CD8-positive, alpha-beta T cell (primary cell): ENCODE measurements at regions of chr15 and their contacts with region 1.

Region 1: GRCh38 chr15:40204100-40204499 is 34.8 kb upstream of the PAK6 start:
- DNase-seq: no peak
- ATAC-seq: no peak
- H3K4me3 ChIP-seq: no peak overlapping the region
- H3K4me3 Mint-ChIP-seq: no peak overlapping the region
- H3K27ac ChIP-seq: no peak overlapping the region
- H3K27ac Mint-ChIP-seq: no peak overlapping the region
- H3K4me1 ChIP-seq: no peaks in the 10 kb centered on the region
- H3K4me1 Mint-ChIP-seq: peaks cover under 1% of the 10 kb centered on the region
- H3K27me3 ChIP-seq: no peaks in the 10 kb centered on the region
- H3K27me3 Mint-ChIP-seq: no peaks in the 10 kb centered on the region
- CTCF ChIP-seq: no peak

Region 2: DNA sequence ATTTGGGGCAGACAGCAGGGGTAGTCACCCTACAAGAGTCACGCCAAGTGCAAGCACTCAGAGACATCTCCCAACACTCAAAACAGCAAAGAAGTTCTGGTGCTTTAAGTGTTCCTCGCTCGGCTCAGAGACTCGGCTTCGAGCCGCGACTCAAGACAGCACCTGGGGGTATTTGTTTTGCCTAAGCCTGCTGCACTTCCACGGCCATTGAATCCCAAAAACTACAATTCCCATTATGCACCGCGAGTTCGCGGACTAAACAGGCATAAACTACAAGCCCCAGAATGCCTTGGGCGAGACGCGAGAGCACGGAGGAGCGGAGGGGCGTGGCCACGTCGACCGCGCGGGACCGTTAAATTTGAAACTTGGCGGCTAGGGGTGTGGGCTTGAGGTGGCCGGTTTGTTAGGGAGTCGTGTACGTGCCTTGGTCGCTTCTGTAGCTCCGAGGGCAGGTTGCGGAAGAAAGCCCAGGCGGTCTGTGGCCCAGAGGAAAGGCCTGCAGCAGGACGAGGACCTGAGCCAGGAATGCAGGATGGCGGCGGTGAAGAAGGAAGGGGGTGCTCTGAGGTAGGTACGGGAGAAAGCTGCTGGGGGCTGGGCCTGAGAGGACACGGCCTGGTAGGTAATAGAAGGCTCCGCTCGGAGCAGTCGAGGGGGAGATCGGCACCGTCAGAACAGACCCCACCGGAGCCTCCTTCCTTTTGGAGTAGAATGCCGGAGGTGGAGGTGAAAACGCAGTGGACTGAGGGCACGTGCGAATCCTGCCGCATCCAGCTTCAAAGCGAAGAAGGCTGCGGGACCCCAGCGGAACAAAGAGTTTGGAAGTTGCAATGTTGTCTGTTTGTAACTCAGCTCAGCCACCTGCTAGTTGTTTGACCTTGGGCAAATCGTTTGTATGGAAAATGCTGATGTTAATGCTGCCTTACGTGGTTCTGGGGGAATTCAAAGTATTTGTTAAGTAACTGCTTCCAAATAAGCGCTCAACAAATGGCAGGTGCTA is 43.1 kb before region 1 on chr15 and contains the start of gene BUB1B:
- CTCF ChIA-PET with region 1: no interaction called
- POLR2A ChIA-PET with region 1: no interaction called
- intact Hi-C with region 1: no loop called
- DNase-seq: peak; percentile 82 to 96 (median 91)
- ATAC-seq: peak; percentile 98
- H3K4me3 ChIP-seq: peak within 1 kb of the TSS; percentile 61 to 71
- H3K4me3 Mint-ChIP-seq: no peak within 1 kb of the TSS
- H3K27ac ChIP-seq: no peak within 1 kb of the TSS
- H3K27ac Mint-ChIP-seq: no peak within 1 kb of the TSS
- H3K4me1 ChIP-seq: peaks cover 10% of the 10 kb centered on the region
- H3K4me1 Mint-ChIP-seq: no peaks in the 10 kb centered on the region
- H3K27me3 ChIP-seq: no peaks in the 10 kb centered on the region
- H3K27me3 Mint-ChIP-seq: no peaks in the 10 kb centered on the region
- CTCF ChIP-seq: no peak
- total RNA-seq, gene BUB1B: 0.47 to 1.2 TPM

Region 3: GRCh38 chr15:40256638-40257235 is 52.6 kb after region 1 on chr15:
- CTCF ChIA-PET with region 1: no interaction called
- POLR2A ChIA-PET with region 1: no interaction called
- intact Hi-C with region 1: loop called in 1 of 2 experiments (anchors 1 kb)
- DNase-seq: peak in 2 of 9 experiments; percentile 67 to 76
- ATAC-seq: peak; percentile 67
- H3K4me3 ChIP-seq: no peak overlapping the region
- H3K4me3 Mint-ChIP-seq: no peak overlapping the region
- H3K27ac ChIP-seq: peak overlapping the region in 1 of 2 experiments; percentile 63
- H3K27ac Mint-ChIP-seq: peak overlapping the region; percentile 52
- H3K4me1 ChIP-seq: peaks cover 11% of the 10 kb centered on the region
- H3K4me1 Mint-ChIP-seq: peaks cover 11% of the 10 kb centered on the region
- H3K27me3 ChIP-seq: peaks cover 0 to 3% of the 10 kb centered on the region in 2 experiments
- H3K27me3 Mint-ChIP-seq: peaks cover 20% of the 10 kb centered on the region
- CTCF ChIP-seq: no peak